A673 (cell line): ENCODE measurements at regions of chr3 and their contacts with region 1.

Region 1: GRCh38 chr3:39497753-39498152 is 30.3 kb downstream of the MOBP start:
- DNase-seq: no peak
- H3K4me3 ChIP-seq: no peak overlapping the region
- H3K27ac ChIP-seq: no peak overlapping the region
- H3K4me1 ChIP-seq: no peaks in the 10 kb centered on the region
- H3K27me3 ChIP-seq: peaks cover 19% of the 10 kb centered on the region
- CTCF ChIP-seq: no peak

Region 2: GRCh38 chr3:39075910-39076309 is 421.8 kb before region 1 on chr3:
- CTCF ChIA-PET with region 1: no interaction called
- POLR2A ChIA-PET with region 1: no interaction called
- intact Hi-C with region 1: no loop called
- DNase-seq: no peak
- H3K4me3 ChIP-seq: no peak overlapping the region
- H3K27ac ChIP-seq: no peak overlapping the region
- H3K4me1 ChIP-seq: no peaks in the 10 kb centered on the region
- H3K27me3 ChIP-seq: no peaks in the 10 kb centered on the region
- CTCF ChIP-seq: no peak

Region 3: DNA sequence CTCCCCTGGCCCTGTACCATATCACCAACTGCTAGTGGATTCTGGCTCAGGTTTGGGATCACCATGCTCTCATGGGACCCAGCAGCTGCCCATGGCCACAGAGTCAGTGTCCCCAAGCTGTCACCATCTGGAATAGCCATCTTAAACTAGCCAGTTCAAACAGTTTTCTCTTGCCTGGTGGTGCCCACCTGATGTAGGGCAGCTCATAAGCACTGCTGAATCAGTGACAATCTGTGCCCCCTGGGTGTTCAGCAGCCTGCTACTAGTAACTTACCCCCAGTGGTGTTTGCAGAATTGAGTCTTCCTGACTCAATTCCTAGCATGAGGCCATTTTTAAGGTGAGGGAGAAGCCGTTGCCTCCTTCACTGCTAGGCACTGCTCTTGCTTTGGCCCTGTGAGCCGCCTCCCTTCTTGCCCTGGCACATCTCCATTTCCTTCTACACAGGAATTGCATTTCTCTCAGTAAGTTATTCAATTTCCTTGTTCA is 83.3 kb before region 1 on chr3:
- CTCF ChIA-PET with region 1: interaction called, 3 read pairs
- POLR2A ChIA-PET with region 1: no interaction called
- intact Hi-C with region 1: loop called (anchors 1 kb)
- DNase-seq: no peak
- H3K4me3 ChIP-seq: no peak overlapping the region
- H3K27ac ChIP-seq: no peak overlapping the region
- H3K4me1 ChIP-seq: no peaks in the 10 kb centered on the region
- H3K27me3 ChIP-seq: no peaks in the 10 kb centered on the region
- CTCF ChIP-seq: no peak

Region 4: GRCh38 chr3:39447637-39448483 is 49.9 kb before region 1 on chr3:
- CTCF ChIA-PET with region 1: interaction called, 7 read pairs
- POLR2A ChIA-PET with region 1: no interaction called
- intact Hi-C with region 1: loop called (anchors 1 kb)
- DNase-seq: peak; percentile 75
- H3K4me3 ChIP-seq: no peak overlapping the region
- H3K27ac ChIP-seq: no peak overlapping the region
- H3K4me1 ChIP-seq: no peaks in the 10 kb centered on the region
- H3K27me3 ChIP-seq: no peaks in the 10 kb centered on the region
- CTCF ChIP-seq: peak; percentile 69

Region 5: GRCh38 chr3:39651993-39652739 is 154.4 kb after region 1 on chr3:
- CTCF ChIA-PET with region 1: no interaction called
- POLR2A ChIA-PET with region 1: no interaction called
- intact Hi-C with region 1: no loop called
- DNase-seq: no peak
- H3K4me3 ChIP-seq: no peak overlapping the region
- H3K27ac ChIP-seq: no peak overlapping the region
- H3K4me1 ChIP-seq: no peaks in the 10 kb centered on the region
- H3K27me3 ChIP-seq: no peaks in the 10 kb centered on the region
- CTCF ChIP-seq: no peak